MCF 10A (cell line): ENCODE measurements at regions of chr1 and their contacts with region 1.

Region 1: GRCh38 chr1:186680245-186681061 is at the start of gene PTGS2:
- DNase-seq: peak; percentile 96
- H3K4me3 Mint-ChIP-seq: peak within 1 kb of the TSS; percentile 96
- H3K27ac Mint-ChIP-seq: peak within 1 kb of the TSS; percentile 97
- H3K4me1 Mint-ChIP-seq: peaks cover 29% of the 10 kb centered on the region
- H3K27me3 Mint-ChIP-seq: no peaks in the 10 kb centered on the region
- CTCF ChIP-seq: peak; percentile 64
- total RNA-seq, gene PTGS2: 6.0 and 17.6 TPM in 2 replicates

Region 2: GRCh38 chr1:186404454-186405051 is 275.9 kb before region 1 on chr1:
- CTCF ChIA-PET with region 1: interaction called, 4 read pairs
- POLR2A ChIA-PET with region 1: no interaction called
- intact Hi-C with region 1: loop called (anchors 2 kb)
- DNase-seq: peak; percentile 71
- H3K4me3 Mint-ChIP-seq: no peak overlapping the region
- H3K27ac Mint-ChIP-seq: no peak overlapping the region
- H3K4me1 Mint-ChIP-seq: no peaks in the 10 kb centered on the region
- H3K27me3 Mint-ChIP-seq: no peaks in the 10 kb centered on the region
- CTCF ChIP-seq: peak; percentile 78

Region 3: GRCh38 chr1:186611156-186611555 is 69.3 kb before region 1 on chr1:
- CTCF ChIA-PET with region 1: interaction called, 134 read pairs
- POLR2A ChIA-PET with region 1: interaction called, 15 read pairs
- intact Hi-C with region 1: no loop called
- DNase-seq: no peak
- H3K4me3 Mint-ChIP-seq: no peak overlapping the region
- H3K27ac Mint-ChIP-seq: no peak overlapping the region
- H3K4me1 Mint-ChIP-seq: no peaks in the 10 kb centered on the region
- H3K27me3 Mint-ChIP-seq: no peaks in the 10 kb centered on the region
- CTCF ChIP-seq: no peak

Region 4: DNA sequence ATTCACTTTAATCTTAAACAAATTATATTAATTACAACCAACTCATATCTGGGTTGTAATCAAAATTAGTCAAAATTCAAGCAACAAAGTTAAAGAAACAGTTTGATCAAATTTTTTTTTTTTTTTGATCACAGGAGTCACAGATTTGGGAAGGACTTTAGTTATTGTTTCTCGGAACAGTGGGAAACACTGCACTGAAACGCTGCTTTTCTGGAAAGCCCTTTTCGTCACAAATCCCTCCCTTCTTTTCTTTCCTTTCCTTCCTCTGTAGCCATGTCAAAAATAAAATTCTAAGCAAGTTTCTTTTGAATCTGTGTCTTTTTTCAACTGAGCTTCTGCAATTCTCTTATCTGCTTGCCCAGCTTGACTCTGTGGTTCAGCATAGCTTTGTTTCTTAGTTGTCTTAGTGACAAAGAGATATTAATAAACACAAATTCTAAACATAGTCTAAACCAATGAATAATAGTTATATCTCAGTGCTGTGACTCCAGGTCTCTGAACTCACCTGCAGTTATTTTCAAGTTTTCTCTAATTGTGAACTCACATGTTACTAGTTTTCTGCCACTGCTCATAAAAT is 54.0 kb before region 1 on chr1:
- CTCF ChIA-PET with region 1: interaction called, 14 read pairs
- POLR2A ChIA-PET with region 1: interaction called, 4 read pairs
- intact Hi-C with region 1: no loop called
- DNase-seq: no peak
- H3K4me3 Mint-ChIP-seq: no peak overlapping the region
- H3K27ac Mint-ChIP-seq: no peak overlapping the region
- H3K4me1 Mint-ChIP-seq: no peaks in the 10 kb centered on the region
- H3K27me3 Mint-ChIP-seq: no peaks in the 10 kb centered on the region
- CTCF ChIP-seq: no peak

Region 5: GRCh38 chr1:186662740-186663139 is 17.7 kb before region 1 on chr1:
- CTCF ChIA-PET with region 1: interaction called, 24 read pairs
- POLR2A ChIA-PET with region 1: interaction called, 41 read pairs
- intact Hi-C with region 1: loop called (anchors 1 kb)
- DNase-seq: peak; percentile 61
- H3K4me3 Mint-ChIP-seq: no peak overlapping the region
- H3K27ac Mint-ChIP-seq: no peak overlapping the region
- H3K4me1 Mint-ChIP-seq: peaks cover 11% of the 10 kb centered on the region
- H3K27me3 Mint-ChIP-seq: no peaks in the 10 kb centered on the region
- CTCF ChIP-seq: no peak

Region 6: GRCh38 chr1:186923486-186923885 is 243.0 kb after region 1 on chr1:
- CTCF ChIA-PET with region 1: interaction called, 3 read pairs
- POLR2A ChIA-PET with region 1: no interaction called
- intact Hi-C with region 1: loop called (anchors 2 kb)
- DNase-seq: peak; percentile 23
- H3K4me3 Mint-ChIP-seq: no peak overlapping the region
- H3K27ac Mint-ChIP-seq: no peak overlapping the region
- H3K4me1 Mint-ChIP-seq: peaks cover 9% of the 10 kb centered on the region
- H3K27me3 Mint-ChIP-seq: no peaks in the 10 kb centered on the region
- CTCF ChIP-seq: no peak